ENCODE measurements at regions of chr18 and their contacts with region 1.

Region 1: DNA sequence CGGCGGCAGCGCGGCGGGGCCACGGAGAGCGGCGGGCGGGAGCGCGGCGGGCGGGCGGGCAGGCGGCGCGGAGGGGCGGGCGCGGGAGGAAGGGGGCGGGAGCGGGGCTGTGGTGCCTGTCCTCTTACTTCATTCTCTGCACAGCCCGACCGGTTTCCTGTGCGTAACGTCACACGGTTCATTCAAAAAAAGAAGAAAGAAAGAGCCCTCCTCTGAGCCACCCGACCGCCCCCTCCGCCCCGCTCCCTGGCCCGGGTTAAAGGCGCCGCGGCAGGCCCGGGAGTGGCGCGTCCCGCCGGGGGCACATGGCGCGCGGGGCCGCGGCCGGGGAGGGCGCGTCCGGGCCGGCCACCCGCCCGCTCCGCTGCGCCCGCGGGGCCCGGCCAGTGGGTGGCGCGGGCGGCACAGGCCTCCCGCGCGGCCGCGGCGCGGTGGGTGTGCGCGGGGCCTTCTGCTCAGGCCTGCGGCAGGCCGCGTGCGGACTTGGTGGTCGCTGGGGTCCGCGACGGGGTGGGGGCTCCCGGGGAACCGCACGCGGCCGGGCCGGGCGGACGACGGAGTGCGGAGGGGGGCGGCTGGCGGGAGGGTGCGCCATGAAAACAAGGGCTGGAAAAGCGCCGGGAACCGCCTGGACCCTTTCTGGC is 599 bp upstream of the BCL2 start:
- DNase-seq: peak; percentile 93
- H3K4me3 Mint-ChIP-seq: peak overlapping the region; percentile 85
- H3K27ac Mint-ChIP-seq: peak overlapping the region; percentile 89
- H3K4me1 Mint-ChIP-seq: peaks cover 25% of the 10 kb centered on the region
- H3K27me3 Mint-ChIP-seq: peaks cover 4% of the 10 kb centered on the region

Region 2: GRCh38 chr18:63016270-63016669 is 303.9 kb before region 1 on chr18:
- CTCF ChIA-PET with region 1: interaction called, 92 read pairs
- DNase-seq: peak; percentile 67
- H3K4me3 Mint-ChIP-seq: no peak overlapping the region
- H3K27ac Mint-ChIP-seq: no peak overlapping the region
- H3K4me1 Mint-ChIP-seq: no peaks in the 10 kb centered on the region
- H3K27me3 Mint-ChIP-seq: peaks cover 38% of the 10 kb centered on the region

Region 3: GRCh38 chr18:63131106-63131958 is 188.8 kb before region 1 on chr18:
- CTCF ChIA-PET with region 1: interaction called, 80 read pairs
- DNase-seq: peak; percentile 72
- H3K4me3 Mint-ChIP-seq: no peak overlapping the region
- H3K27ac Mint-ChIP-seq: peak overlapping the region; percentile 62
- H3K4me1 Mint-ChIP-seq: peaks cover 49% of the 10 kb centered on the region
- H3K27me3 Mint-ChIP-seq: no peaks in the 10 kb centered on the region

Region 4: GRCh38 chr18:63161761-63162195 is 158.4 kb before region 1 on chr18:
- CTCF ChIA-PET with region 1: interaction called, 45 read pairs
- DNase-seq: peak; percentile 88
- H3K4me3 Mint-ChIP-seq: peak overlapping the region; percentile 78
- H3K27ac Mint-ChIP-seq: peak overlapping the region; percentile 93
- H3K4me1 Mint-ChIP-seq: peaks cover 93% of the 10 kb centered on the region
- H3K27me3 Mint-ChIP-seq: no peaks in the 10 kb centered on the region

Region 5: DNA sequence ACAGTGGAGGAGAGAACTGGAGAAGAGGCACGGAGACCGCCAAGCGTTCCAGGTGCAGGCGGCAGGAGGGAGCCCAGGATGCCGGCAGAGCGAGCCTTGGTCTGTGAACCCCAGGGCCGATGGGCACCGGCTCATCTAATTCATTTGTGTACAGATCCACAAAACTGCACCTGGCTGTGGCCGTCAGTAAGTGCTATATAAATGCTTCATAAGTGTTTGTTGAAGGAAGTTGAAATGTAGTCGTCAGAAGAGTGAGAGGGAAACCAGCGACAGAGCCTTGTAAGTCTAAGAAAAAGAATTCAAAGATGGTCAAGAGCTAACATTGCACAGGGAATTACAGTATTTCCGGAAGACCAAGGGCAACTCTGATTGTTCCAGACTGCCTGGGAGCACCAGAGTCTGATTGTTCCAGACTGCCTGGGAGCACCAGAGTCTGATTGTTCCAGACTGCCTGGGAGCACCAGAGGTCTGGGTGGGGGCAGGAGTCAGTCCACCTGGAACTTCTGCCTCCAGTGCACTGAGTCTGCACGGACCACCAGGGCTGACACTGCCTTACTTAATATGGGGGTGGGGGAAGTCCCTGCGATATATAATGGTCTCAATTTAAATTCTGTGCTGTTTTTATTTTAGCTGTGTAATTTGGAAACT is 112.9 kb before region 1 on chr18:
- CTCF ChIA-PET with region 1: interaction called, 11 read pairs
- DNase-seq: peak; percentile 45
- H3K4me3 Mint-ChIP-seq: peak overlapping the region; percentile 85
- H3K27ac Mint-ChIP-seq: peak overlapping the region; percentile 97
- H3K4me1 Mint-ChIP-seq: peaks cover 95% of the 10 kb centered on the region
- H3K27me3 Mint-ChIP-seq: no peaks in the 10 kb centered on the region

Region 6: DNA sequence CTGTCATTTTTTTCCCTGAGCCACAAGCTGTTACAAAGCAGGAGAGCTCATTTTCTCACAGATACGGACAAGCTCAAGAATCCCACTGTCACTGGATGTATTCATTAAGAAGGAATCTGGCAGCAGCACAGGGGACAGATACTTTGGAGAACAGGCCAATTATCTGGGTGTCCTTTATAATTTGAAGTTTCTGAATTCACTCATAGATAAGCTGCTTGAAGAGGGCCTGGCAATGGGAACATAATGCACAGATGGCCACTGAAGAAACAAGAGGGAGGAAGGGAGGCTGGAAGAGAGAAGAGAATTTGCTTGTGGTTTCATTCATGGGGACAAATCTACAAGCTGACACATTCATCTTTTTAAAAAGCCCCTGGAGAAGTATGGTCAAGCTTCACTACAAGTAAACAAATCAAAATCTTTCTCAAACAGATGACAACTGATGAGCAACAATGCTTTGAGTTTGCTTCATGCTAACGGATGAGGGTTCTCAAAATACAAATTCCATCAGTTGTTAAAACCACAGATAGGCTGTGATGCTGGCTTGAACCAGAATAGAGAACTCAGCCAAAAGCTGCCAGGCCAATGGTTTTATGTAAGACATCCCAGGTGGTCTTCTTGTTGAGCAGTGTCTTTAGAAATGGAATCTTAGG is 12.5 kb before region 1 on chr18:
- CTCF ChIA-PET with region 1: interaction called, 21 read pairs
- DNase-seq: no peak
- H3K4me3 Mint-ChIP-seq: no peak overlapping the region
- H3K27ac Mint-ChIP-seq: no peak overlapping the region
- H3K4me1 Mint-ChIP-seq: peaks cover 86% of the 10 kb centered on the region
- H3K27me3 Mint-ChIP-seq: no peaks in the 10 kb centered on the region

Region 7: GRCh38 chr18:63439334-63439733 is 119.2 kb after region 1 on chr18:
- CTCF ChIA-PET with region 1: interaction called, 24 read pairs
- DNase-seq: peak; percentile 60
- H3K4me3 Mint-ChIP-seq: no peak overlapping the region
- H3K27ac Mint-ChIP-seq: no peak overlapping the region
- H3K4me1 Mint-ChIP-seq: peaks cover 4% of the 10 kb centered on the region
- H3K27me3 Mint-ChIP-seq: peaks cover 47% of the 10 kb centered on the region

Region 8: GRCh38 chr18:63578357-63578958 is 258.3 kb after region 1 on chr18:
- CTCF ChIA-PET with region 1: no interaction called
- DNase-seq: peak; percentile 28
- H3K4me3 Mint-ChIP-seq: no peak overlapping the region
- H3K27ac Mint-ChIP-seq: no peak overlapping the region
- H3K4me1 Mint-ChIP-seq: no peaks in the 10 kb centered on the region
- H3K27me3 Mint-ChIP-seq: peaks cover 4% of the 10 kb centered on the region

Region 9: GRCh38 chr18:63603772-63604171 is 283.6 kb after region 1 on chr18:
- CTCF ChIA-PET with region 1: no interaction called
- DNase-seq: no peak
- H3K4me3 Mint-ChIP-seq: no peak overlapping the region
- H3K27ac Mint-ChIP-seq: no peak overlapping the region
- H3K4me1 Mint-ChIP-seq: no peaks in the 10 kb centered on the region
- H3K27me3 Mint-ChIP-seq: no peaks in the 10 kb centered on the region